Heart left ventricle (tissue), 16 donors: ENCODE measurements at regions of chr17 and their contacts with region 1.

Region 1: GRCh38 chr17:81419328-81419885 is 24.1 kb downstream of the BAHCC1 start:
- DNase-seq: peak; percentile 94 to 97 (median 95)
- ATAC-seq: peak; percentile 71 to 87 (median 79)
- H3K4me3 ChIP-seq: peak overlapping the region in 10 of 12 donors; percentile 13 to 45 (median 38)
- H3K27ac ChIP-seq: peak overlapping the region; percentile 70 to 97 (median 92)
- H3K4me1 ChIP-seq: peaks cover 31 to 78% (median 69%) of the 10 kb centered on the region in 12 donors
- H3K27me3 ChIP-seq: no peaks in the 10 kb centered on the region
- CTCF ChIP-seq: no peak
- POLR2A ChIP-seq: peak in 1 of 2 donors; percentile 50

Region 2: DNA sequence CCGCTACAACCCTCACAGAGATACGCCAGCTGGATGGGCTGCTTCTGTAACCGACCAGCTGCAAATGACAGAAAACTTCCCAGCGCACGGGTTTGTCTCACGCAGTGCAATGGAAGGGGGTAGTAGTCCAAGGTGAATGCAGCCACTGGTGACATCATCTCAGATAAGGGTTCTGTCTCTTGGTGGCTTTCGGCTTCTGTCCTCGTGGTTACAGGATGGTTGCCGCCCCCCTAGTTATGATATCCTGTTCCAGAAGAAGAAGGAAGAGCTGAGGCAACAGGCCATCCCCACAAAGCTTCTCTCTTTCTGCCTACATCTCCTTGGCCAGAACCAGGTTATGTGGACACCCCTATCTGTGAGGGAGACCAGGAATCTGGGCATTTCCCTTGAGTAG is 64.5 kb before region 1 on chr17:
- intact Hi-C with region 1: no loop called
- DNase-seq: no peak
- ATAC-seq: no peak
- H3K4me3 ChIP-seq: no peak overlapping the region
- H3K27ac ChIP-seq: no peak overlapping the region
- H3K4me1 ChIP-seq: peaks cover 0 to 16% (median 2%) of the 10 kb centered on the region in 12 donors
- H3K27me3 ChIP-seq: no peaks in the 10 kb centered on the region
- CTCF ChIP-seq: no peak
- POLR2A ChIP-seq: no peak

Region 3: GRCh38 chr17:81401723-81402529 is 17.5 kb before region 1 on chr17:
- intact Hi-C with region 1: loop called in 2 of 10 experiments (anchors 1 to 2 kb)
- DNase-seq: peak in 2 of 5 donors; percentile 74
- ATAC-seq: peak in 3 of 4 donors; percentile 6 to 16 (median 7)
- H3K4me3 ChIP-seq: peak overlapping the region in 8 of 12 donors; percentile 6 to 95 (median 80)
- H3K27ac ChIP-seq: peak overlapping the region; percentile 51 to 98 (median 97)
- H3K4me1 ChIP-seq: peaks cover 16 to 88% (median 66%) of the 10 kb centered on the region in 12 donors
- H3K27me3 ChIP-seq: peaks cover 0 to 15% (median 0%) of the 10 kb centered on the region in 9 donors
- CTCF ChIP-seq: peak in 10 of 12 donors; percentile 6 to 47 (median 24)
- POLR2A ChIP-seq: no peak

Region 4: GRCh38 chr17:81666342-81667191 is 247.2 kb after region 1 on chr17 and contains the starts of genes CCDC137 and OXLD1:
- intact Hi-C with region 1: no loop called
- DNase-seq: peak; percentile 97 to 98 (median 98)
- ATAC-seq: peak; percentile 97 to 100 (median 99)
- H3K4me3 ChIP-seq: peak within 1 kb of the TSS; percentile 77 to 100 (median 94)
- H3K27ac ChIP-seq: peak within 1 kb of the TSS; percentile 62 to 95 (median 88)
- H3K4me1 ChIP-seq: peaks cover 0 to 29% (median 16%) of the 10 kb centered on the region in 12 donors
- H3K27me3 ChIP-seq: no peaks in the 10 kb centered on the region
- CTCF ChIP-seq: no peak
- POLR2A ChIP-seq: peak; percentile 64 to 95
- total RNA-seq, gene CCDC137: 3.5 to 10.1 (median 6.3) TPM
- total RNA-seq, gene OXLD1: 16.9 to 28.8 (median 21.7) TPM